ENCODE measurements at regions of chr4 and their contacts with region 1.

Region 1: DNA sequence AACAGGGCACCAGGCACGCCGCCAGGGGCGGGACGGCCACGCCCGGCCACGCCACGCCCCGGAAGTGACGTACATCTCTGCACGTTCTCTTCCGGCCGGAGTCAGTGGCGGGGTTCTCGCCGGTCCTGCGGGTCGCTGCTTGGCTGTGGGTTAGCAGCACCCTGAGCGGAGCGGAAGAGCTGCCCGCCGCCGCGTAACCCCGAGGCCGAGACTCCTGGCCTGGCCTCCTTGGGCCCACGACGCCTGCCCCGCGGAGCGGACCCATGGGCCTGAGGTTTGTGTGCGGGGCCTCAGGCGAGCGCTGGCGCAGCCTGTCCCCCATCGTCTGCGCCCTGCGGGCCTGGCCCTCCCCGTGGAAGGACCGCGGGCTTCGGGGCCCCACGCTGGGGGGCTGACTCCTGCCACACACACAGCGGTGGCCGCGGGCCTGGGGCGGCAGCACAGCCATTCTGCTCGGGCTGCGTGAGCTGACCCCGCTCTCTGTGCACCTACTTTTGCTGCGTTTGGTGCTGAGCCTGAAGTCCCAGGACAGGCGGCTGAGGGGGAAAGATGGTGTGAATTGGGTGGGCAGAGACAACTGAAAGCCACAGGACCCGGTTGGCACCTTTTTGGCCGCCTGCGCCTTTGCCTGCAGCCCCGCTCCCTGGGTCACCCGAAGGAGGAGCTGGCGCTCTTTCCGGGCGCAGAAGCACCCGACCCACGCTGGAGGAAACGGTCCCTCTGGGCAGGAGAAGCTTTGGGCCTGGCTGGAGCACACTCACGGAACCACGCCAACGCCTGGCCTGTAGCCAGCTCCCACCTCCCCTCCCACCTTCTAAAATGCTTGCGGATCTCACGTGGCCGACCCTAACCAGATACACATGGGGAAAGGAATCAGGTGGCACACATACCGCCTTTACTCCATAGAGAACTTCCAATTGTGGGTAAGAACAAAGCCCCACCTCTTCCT is 28.1 kb downstream of the NOP14 start:
- DNase-seq: peak; percentile 97
- ATAC-seq: peak; percentile 45
- H3K4me3 Mint-ChIP-seq: peak overlapping the region; percentile 87
- H3K27ac Mint-ChIP-seq: peak overlapping the region; percentile 90
- H3K4me1 Mint-ChIP-seq: peaks cover 49% of the 10 kb centered on the region
- H3K27me3 Mint-ChIP-seq: no peaks in the 10 kb centered on the region
- CTCF ChIP-seq: no peak

Region 2: DNA sequence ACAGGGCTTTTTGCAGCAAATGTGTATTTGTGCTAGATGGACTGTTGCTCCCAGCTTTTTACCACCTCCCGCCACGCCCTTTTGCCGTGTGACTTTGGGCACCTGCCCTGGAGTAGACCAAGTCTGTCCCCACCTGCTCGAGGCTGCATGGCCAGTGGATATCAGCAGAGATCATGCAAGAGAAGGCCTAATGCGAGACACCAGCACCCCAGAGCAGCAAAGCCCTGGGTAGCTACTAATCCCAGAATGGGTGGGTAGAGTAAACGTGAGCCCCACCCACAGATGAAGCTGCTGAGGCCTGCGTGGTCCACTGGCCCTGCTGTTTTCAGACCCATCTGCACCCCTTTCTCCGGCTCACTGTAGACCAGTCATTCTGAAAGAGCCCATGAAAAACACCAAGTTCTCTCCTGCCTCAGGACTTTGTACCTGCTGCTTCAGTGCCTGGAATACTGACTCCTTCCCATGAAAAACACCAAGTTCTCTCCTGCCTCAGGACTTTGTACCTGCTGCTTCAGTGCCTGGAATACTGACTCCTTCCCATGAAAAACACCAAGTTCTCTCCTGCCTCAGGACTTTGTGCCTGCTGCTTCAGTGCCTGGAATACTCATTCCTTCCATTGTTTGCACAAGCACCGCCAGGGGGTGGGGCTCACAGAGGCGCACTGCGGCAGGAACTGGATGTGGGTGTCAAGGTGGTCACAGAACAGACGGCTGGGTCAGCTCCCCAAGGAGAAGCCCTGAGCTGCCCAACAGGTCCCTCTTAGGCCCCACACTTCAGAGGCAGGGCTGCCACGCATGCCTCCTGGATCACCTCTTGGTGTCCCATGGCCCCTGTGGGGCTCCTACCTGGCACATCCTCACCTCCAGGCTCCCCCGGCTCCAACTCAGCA is 173.8 kb before region 1 on chr4:
- CTCF ChIA-PET with region 1: interaction called, 9 read pairs
- POLR2A ChIA-PET with region 1: interaction called, 15 read pairs
- intact Hi-C with region 1: loop called (anchors 5 kb)
- DNase-seq: peak; percentile 59
- ATAC-seq: no peak
- H3K4me3 Mint-ChIP-seq: no peak overlapping the region
- H3K27ac Mint-ChIP-seq: no peak overlapping the region
- H3K4me1 Mint-ChIP-seq: peaks cover 12% of the 10 kb centered on the region
- H3K27me3 Mint-ChIP-seq: no peaks in the 10 kb centered on the region
- CTCF ChIP-seq: no peak

Region 3: GRCh38 chr4:2849267-2850152 is 85.6 kb before region 1 on chr4:
- CTCF ChIA-PET with region 1: no interaction called
- POLR2A ChIA-PET with region 1: interaction called, 7 read pairs
- intact Hi-C with region 1: loop called (anchors 5 kb)
- DNase-seq: no peak
- ATAC-seq: no peak
- H3K4me3 Mint-ChIP-seq: no peak overlapping the region
- H3K27ac Mint-ChIP-seq: peak overlapping the region; percentile 55
- H3K4me1 Mint-ChIP-seq: peaks cover 71% of the 10 kb centered on the region
- H3K27me3 Mint-ChIP-seq: no peaks in the 10 kb centered on the region
- CTCF ChIP-seq: no peak

Region 4: DNA sequence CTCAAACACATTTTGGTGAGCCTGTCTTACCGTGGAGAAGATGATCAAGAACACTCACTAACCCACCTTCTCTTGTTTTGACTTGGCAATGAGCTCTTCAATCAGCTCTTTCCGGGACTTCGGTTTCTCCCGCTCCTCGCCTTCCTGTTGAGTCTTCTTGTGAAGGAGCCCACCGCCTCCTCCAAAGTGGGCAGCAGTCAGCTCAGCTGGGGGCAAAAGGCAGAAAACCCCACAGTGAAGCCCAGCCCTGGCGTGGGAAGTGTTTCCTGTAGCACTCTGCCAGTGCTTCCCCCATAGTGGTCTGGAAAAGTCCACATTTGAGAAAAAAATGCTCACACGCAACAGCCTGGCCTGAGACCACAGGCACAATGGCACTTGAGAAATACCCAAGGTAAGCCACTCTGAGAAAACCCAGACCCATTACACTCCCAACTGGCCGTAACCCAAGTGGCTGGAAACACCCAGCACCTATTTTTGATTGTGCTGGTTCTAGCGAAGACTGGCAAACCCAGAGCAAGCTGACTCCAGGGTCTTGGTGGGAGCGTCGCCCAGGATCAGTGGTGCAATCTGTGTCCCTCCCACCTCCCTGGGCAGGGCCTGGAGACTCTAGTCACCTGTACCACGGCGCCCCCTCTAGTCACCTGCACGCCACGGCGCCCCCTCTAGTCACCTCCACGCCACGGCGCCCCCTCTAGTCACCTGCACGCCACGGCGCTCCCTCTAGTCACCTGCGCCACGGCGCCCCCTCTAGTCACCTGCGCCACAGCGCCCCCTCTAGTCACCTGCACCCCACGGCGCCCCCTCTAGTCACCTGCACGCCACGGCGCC is 19.5 kb after region 1 on chr4:
- CTCF ChIA-PET with region 1: interaction called, 59 read pairs
- POLR2A ChIA-PET with region 1: interaction called, 121 read pairs
- intact Hi-C with region 1: no loop called
- DNase-seq: peak; percentile 87
- ATAC-seq: peak; percentile 80
- H3K4me3 Mint-ChIP-seq: peak overlapping the region; percentile 41
- H3K27ac Mint-ChIP-seq: peak overlapping the region; percentile 93
- H3K4me1 Mint-ChIP-seq: peaks cover 59% of the 10 kb centered on the region
- H3K27me3 Mint-ChIP-seq: no peaks in the 10 kb centered on the region
- CTCF ChIP-seq: no peak

Region 5: DNA sequence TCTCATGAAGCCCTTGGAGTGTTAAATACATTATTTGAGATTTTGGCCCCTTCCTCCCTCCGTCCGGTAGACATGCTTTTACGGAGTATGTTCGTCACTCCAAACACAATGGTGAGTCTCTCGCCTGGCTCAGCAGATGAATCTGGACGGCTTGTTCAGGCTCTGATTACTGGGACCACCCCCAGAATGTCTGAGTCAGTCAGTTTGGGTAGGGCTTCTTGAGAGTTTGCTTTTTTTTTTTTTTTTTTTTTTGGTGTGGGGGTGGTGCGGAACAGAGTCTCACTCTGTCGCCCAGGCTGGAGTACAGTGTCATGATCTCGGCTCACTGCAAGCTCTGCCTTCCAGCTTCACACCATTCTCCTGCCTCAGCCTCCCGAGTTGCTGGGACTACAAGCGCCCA is 251.5 kb after region 1 on chr4:
- CTCF ChIA-PET with region 1: no interaction called
- POLR2A ChIA-PET with region 1: no interaction called
- intact Hi-C with region 1: no loop called
- DNase-seq: no peak
- ATAC-seq: no peak
- H3K4me3 Mint-ChIP-seq: no peak overlapping the region
- H3K27ac Mint-ChIP-seq: no peak overlapping the region
- H3K4me1 Mint-ChIP-seq: peaks cover 3% of the 10 kb centered on the region
- H3K27me3 Mint-ChIP-seq: no peaks in the 10 kb centered on the region
- CTCF ChIP-seq: no peak

Measured in activated CD8-positive, alpha-beta T cell treated with anti-CD3 and anti-CD28 coated beads for 36 hours (primary cell).